Ascending aorta (tissue), 2 donors: ENCODE measurements at regions of chr11 and their contacts with region 1.

Region 1: DNA sequence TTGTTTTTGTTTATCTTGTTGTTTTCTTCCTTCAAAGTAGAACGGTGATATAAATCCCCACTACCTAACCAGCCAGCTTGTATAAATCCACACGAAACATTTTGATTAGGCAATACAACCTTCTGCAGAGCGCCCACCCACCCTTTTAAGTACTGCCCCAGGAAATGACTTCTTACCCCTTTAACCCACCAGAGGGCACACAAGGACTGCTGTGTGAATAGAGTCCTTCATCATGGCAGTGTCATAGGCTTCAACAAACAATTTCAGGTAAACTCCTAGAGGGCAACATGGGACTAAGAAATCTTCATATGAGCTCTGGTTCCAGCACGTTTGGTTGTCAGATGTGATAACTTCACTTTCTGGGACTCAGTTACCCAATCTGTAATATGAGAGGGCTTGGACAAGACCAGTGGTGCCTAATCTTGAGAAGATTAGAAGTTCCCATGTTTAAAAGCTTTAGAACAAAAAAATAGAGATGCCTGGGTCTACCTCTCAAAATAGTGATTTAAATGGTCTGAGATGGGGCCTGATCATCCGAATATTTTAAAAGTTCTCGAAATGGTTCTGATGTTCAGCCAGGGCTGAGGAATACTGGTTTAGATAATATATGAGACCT is 56.1 kb downstream of the PIWIL4 start:
- DNase-seq: no peak
- H3K4me3 ChIP-seq: no peak overlapping the region
- H3K27ac ChIP-seq: no peak overlapping the region
- H3K4me1 ChIP-seq: no peaks in the 10 kb centered on the region
- H3K27me3 ChIP-seq: no peaks in the 10 kb centered on the region
- CTCF ChIP-seq: peak; percentile 65 to 72 (median 68)

Region 2: DNA sequence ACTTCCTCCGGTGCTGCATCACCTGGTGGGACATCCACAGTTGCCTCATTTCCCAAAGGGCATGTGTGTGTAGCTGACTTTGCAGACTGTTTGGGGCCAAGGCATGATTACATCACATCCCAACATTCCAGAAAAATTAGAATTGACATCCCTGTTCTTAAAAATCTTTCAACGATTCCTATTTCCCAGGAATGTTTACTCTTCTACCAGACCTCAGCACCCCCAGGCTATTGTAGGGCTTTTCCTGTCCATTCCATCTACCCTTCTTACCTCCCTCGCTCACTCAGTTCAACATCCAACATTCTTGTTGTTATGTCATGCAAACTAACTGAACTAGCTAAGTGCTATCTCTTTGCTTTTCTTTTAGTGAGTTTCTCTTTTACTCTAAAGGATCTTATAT is 18.7 kb before region 1 on chr11:
- intact Hi-C with region 1: no loop called
- DNase-seq: no peak
- H3K4me3 ChIP-seq: no peak overlapping the region
- H3K27ac ChIP-seq: no peak overlapping the region
- H3K4me1 ChIP-seq: no peaks in the 10 kb centered on the region
- H3K27me3 ChIP-seq: no peaks in the 10 kb centered on the region
- CTCF ChIP-seq: no peak

Region 3: GRCh38 chr11:94897330-94897768 is 274.1 kb after region 1 on chr11:
- intact Hi-C with region 1: loop called (anchors 2 kb)
- DNase-seq: no peak
- H3K4me3 ChIP-seq: no peak overlapping the region
- H3K27ac ChIP-seq: no peak overlapping the region
- H3K4me1 ChIP-seq: no peaks in the 10 kb centered on the region
- H3K27me3 ChIP-seq: no peaks in the 10 kb centered on the region
- CTCF ChIP-seq: peak; percentile 56 to 85 (median 82)